ENCODE measurements at regions of chr15 and their contacts with region 1.

Region 1: DNA sequence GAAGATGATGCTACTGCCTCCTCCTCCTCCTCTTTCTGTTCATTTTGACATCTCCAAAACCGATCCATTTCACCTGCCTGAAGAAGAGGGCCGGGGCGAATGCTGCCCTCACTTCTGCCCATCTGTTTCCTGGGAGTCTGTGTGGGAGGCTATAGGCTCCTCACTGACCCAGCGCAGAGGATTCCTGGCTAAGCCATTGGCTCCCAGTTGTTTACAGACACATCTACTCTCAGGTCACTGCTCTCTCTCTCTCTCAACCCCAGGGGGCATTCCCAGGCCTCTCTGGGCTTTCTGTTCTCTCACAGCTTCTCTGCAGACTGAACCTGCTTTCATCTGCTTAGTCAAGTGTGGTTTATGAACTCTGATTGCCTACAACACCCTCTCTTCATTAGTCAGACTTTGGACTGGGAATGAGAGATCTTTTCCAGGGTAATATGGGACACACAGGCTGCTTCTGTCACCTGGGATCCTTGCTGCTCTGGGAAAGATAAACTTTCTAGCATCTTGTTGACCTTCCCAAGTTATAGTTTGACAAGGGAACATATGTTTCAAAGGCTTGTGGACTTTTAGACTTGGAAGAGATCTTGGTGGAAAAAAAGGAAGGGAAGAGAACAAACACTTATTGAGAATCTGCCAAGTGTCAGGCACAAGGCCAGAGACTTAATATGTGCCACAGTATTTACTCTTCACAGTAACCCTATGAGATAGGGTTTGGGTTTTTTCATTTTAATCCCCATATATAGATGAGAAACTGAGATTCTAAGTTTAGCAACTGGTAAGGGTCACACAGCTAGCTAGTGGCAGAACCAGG is 30.2 kb upstream of the USP3 start:
- DNase-seq: peak; percentile 85
- ATAC-seq: peak; percentile 69
- H3K4me3 ChIP-seq: peak overlapping the region in 4 of 5 experiments; percentile 4 to 38 (median 30)
- H3K4me3 Mint-ChIP-seq: peak overlapping the region; percentile 83
- H3K27ac ChIP-seq: peak overlapping the region; percentile 90 to 95
- H3K27ac Mint-ChIP-seq: peak overlapping the region; percentile 97
- H3K4me1 ChIP-seq: peaks cover 59 to 64% of the 10 kb centered on the region in 2 donors
- H3K4me1 Mint-ChIP-seq: peaks cover 69% of the 10 kb centered on the region
- H3K27me3 ChIP-seq: no peaks in the 10 kb centered on the region
- H3K27me3 Mint-ChIP-seq: no peaks in the 10 kb centered on the region
- CTCF ChIP-seq: peak; percentile 25

Region 2: GRCh38 chr15:63436872-63437375 is 37.3 kb before region 1 on chr15:
- CTCF ChIA-PET with region 1: no interaction called
- POLR2A ChIA-PET with region 1: no interaction called
- intact Hi-C with region 1: no loop called
- DNase-seq: no peak
- ATAC-seq: no peak
- H3K4me3 ChIP-seq: no peak overlapping the region
- H3K4me3 Mint-ChIP-seq: no peak overlapping the region
- H3K27ac ChIP-seq: no peak overlapping the region
- H3K27ac Mint-ChIP-seq: no peak overlapping the region
- H3K4me1 ChIP-seq: peaks cover 0 to 6% of the 10 kb centered on the region in 2 donors
- H3K4me1 Mint-ChIP-seq: peaks cover 2% of the 10 kb centered on the region
- H3K27me3 ChIP-seq: no peaks in the 10 kb centered on the region
- H3K27me3 Mint-ChIP-seq: peaks cover 12% of the 10 kb centered on the region
- CTCF ChIP-seq: no peak

Region 3: DNA sequence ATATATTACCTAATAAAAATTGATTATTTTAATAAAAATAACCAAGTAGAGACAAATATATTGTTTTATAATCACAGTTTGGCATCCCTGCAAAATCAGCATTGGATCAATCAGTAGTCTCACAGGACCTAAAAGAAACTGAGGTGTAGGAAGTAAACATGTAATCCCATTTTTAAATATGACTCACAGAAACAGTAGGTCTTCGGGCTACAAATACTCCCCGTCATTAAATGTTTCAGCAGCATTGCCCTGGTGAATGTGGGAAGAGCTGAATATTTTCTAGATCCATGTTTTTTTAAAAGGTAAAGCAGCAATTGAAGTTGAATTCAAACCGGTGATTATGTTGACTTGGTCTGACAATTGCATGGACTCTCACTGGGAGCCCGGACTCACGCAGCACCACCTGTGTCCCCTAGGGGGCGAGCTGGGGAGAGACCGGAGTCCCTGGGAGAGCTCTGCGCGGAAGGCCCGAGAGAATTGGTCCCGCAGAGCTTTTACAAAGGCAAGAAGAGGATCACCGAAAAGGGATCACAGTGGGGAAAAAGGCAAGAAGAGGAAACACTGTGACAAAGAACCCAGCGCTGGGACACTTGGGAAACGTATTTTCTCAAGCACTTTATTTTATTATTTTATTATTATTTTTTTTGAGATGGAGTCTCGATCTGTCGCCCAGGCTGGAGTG is 13.0 kb after region 1 on chr15:
- CTCF ChIA-PET with region 1: interaction called, 96 read pairs
- POLR2A ChIA-PET with region 1: interaction called, 19 read pairs
- intact Hi-C with region 1: loop called (anchors 1 kb)
- DNase-seq: peak; percentile 86
- ATAC-seq: peak; percentile 68
- H3K4me3 ChIP-seq: no peak overlapping the region
- H3K4me3 Mint-ChIP-seq: peak overlapping the region; percentile 80
- H3K27ac ChIP-seq: no peak overlapping the region
- H3K27ac Mint-ChIP-seq: peak overlapping the region; percentile 89
- H3K4me1 ChIP-seq: peaks cover 53 to 78% of the 10 kb centered on the region in 2 donors
- H3K4me1 Mint-ChIP-seq: peaks cover 64% of the 10 kb centered on the region
- H3K27me3 ChIP-seq: no peaks in the 10 kb centered on the region
- H3K27me3 Mint-ChIP-seq: no peaks in the 10 kb centered on the region
- CTCF ChIP-seq: peak; percentile 90

Region 4: DNA sequence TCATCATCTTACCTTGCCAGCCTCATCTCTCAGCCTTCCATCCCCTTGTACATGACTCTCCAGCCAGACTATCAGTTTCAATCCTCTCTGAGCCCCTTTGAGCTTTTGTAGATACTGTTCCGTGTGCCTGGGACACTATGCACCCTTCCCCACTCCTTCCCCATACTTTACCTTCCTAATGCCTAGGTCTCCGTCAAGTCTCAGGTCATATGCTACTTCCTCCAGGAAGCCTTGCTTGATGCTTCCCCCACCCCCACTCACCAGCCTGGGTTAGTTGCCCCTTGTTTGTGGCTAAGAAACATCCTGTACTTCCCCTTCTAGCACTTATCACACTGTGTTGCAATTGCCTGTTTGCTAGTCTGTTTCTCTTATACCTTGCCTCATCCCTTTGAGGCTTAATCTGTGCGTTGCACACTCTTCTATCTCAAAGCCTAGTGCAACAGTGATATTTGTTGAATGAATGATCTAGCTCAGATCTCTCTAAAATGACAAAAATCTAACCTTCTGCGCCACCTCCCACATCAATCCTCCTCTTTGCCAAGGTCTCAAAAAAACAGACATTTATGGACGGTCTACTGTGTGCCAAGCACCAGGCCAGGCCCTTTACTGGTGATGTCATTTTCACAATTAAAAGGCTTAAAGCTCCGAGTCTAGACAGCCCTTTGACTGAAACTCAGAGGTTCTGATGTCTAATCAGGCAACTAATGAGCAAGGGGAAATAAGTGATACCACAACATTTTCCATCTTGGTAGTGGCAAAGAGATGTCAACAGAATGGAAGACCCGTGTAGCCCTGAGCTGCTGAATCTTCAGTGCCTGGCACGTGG is 23.7 kb after region 1 on chr15:
- CTCF ChIA-PET with region 1: interaction called, 148 read pairs
- POLR2A ChIA-PET with region 1: interaction called, 172 read pairs
- intact Hi-C with region 1: loop called (anchors 1 kb)
- DNase-seq: peak; percentile 89
- ATAC-seq: peak; percentile 67
- H3K4me3 ChIP-seq: peak overlapping the region; percentile 6 to 48 (median 21)
- H3K4me3 Mint-ChIP-seq: no peak overlapping the region
- H3K27ac ChIP-seq: peak overlapping the region; percentile 81 to 86
- H3K27ac Mint-ChIP-seq: no peak overlapping the region
- H3K4me1 ChIP-seq: peaks cover 80% of the 10 kb centered on the region in 2 donors
- H3K4me1 Mint-ChIP-seq: peaks cover 65% of the 10 kb centered on the region
- H3K27me3 ChIP-seq: no peaks in the 10 kb centered on the region
- H3K27me3 Mint-ChIP-seq: no peaks in the 10 kb centered on the region
- CTCF ChIP-seq: no peak

Region 5: GRCh38 chr15:63539521-63539920 is 65.3 kb after region 1 on chr15:
- CTCF ChIA-PET with region 1: interaction called, 6 read pairs
- POLR2A ChIA-PET with region 1: interaction called, 3 read pairs
- intact Hi-C with region 1: loop called (anchors 2 kb)
- DNase-seq: no peak
- ATAC-seq: no peak
- H3K4me3 ChIP-seq: no peak overlapping the region
- H3K4me3 Mint-ChIP-seq: no peak overlapping the region
- H3K27ac ChIP-seq: peak overlapping the region in 1 of 2 donors; percentile 68
- H3K27ac Mint-ChIP-seq: peak overlapping the region; percentile 48
- H3K4me1 ChIP-seq: peaks cover 41 to 58% of the 10 kb centered on the region in 2 donors
- H3K4me1 Mint-ChIP-seq: peaks cover 74% of the 10 kb centered on the region
- H3K27me3 ChIP-seq: no peaks in the 10 kb centered on the region
- H3K27me3 Mint-ChIP-seq: no peaks in the 10 kb centered on the region
- CTCF ChIP-seq: no peak

Region 6: GRCh38 chr15:63600616-63601025 is 126.4 kb after region 1 on chr15:
- CTCF ChIA-PET with region 1: interaction called, 37 read pairs
- POLR2A ChIA-PET with region 1: interaction called, 15 read pairs
- intact Hi-C with region 1: no loop called
- DNase-seq: peak; percentile 96
- ATAC-seq: peak; percentile 76
- H3K4me3 ChIP-seq: peak overlapping the region in 4 of 5 experiments; percentile 67 to 86 (median 74)
- H3K4me3 Mint-ChIP-seq: peak overlapping the region; percentile 96
- H3K27ac ChIP-seq: peak overlapping the region; percentile 65 to 76
- H3K27ac Mint-ChIP-seq: peak overlapping the region; percentile 96
- H3K4me1 ChIP-seq: peaks cover 44 to 57% of the 10 kb centered on the region in 2 donors
- H3K4me1 Mint-ChIP-seq: peaks cover 73% of the 10 kb centered on the region
- H3K27me3 ChIP-seq: no peaks in the 10 kb centered on the region
- H3K27me3 Mint-ChIP-seq: no peaks in the 10 kb centered on the region
- CTCF ChIP-seq: no peak